ENCODE measurements at regions of chr16 and their contacts with region 1.

Region 1: GRCh38 chr16:24118126-24118821 is 137.9 kb upstream of the CACNG3 start:
- DNase-seq: no peak
- ATAC-seq: no peak
- H3K4me3 ChIP-seq: no peak overlapping the region
- H3K27ac ChIP-seq: no peak overlapping the region
- H3K4me1 ChIP-seq: no peaks in the 10 kb centered on the region
- H3K27me3 ChIP-seq: peaks cover 16% of the 10 kb centered on the region
- CTCF ChIP-seq: no peak

Region 2: DNA sequence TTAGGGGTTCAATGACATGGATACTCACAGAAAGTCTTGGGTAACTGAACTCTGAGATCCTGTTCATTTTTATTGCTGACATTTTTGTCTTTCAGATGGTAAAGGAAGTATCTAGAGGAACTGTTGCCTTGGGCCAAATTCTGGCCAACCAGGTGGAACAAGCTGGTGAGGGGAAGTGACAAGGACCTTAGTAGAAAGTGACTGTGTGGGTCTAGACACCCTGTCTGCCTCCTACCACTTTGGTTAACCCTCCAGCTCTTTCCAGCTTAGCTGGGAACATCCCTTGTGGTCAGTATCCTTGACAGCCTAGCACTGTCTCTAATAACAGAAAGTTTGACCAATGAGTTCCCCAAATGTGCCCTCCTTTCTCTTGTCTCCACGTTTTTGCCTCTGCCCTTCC is 311.2 kb before region 1 on chr16:
- CTCF ChIA-PET with region 1: no interaction called
- POLR2A ChIA-PET with region 1: no interaction called
- in situ Hi-C with region 1: no loop called
- intact Hi-C with region 1: no loop called
- DNase-seq: no peak
- ATAC-seq: no peak
- H3K4me3 ChIP-seq: no peak overlapping the region
- H3K27ac ChIP-seq: no peak overlapping the region
- H3K4me1 ChIP-seq: no peaks in the 10 kb centered on the region
- H3K27me3 ChIP-seq: peaks cover 14% of the 10 kb centered on the region; the same call in 1 of the 2 replicates
- CTCF ChIP-seq: no peak

Region 3: GRCh38 chr16:24102209-24102660 is 16.0 kb before region 1 on chr16:
- CTCF ChIA-PET with region 1: no interaction called
- POLR2A ChIA-PET with region 1: no interaction called
- in situ Hi-C with region 1: no loop called
- intact Hi-C with region 1: no loop called
- DNase-seq: no peak
- ATAC-seq: no peak
- H3K4me3 ChIP-seq: no peak overlapping the region
- H3K27ac ChIP-seq: no peak overlapping the region
- H3K4me1 ChIP-seq: no peaks in the 10 kb centered on the region
- H3K27me3 ChIP-seq: peaks cover 8% of the 10 kb centered on the region; the same call in 1 of the 2 replicates
- CTCF ChIP-seq: no peak

Region 4: GRCh38 chr16:24130494-24131085 is 12.3 kb after region 1 on chr16:
- CTCF ChIA-PET with region 1: no interaction called
- POLR2A ChIA-PET with region 1: interaction called, 14 read pairs
- in situ Hi-C with region 1: no loop called
- intact Hi-C with region 1: no loop called
- DNase-seq: no peak
- ATAC-seq: no peak
- H3K4me3 ChIP-seq: no peak overlapping the region
- H3K27ac ChIP-seq: no peak overlapping the region
- H3K4me1 ChIP-seq: no peaks in the 10 kb centered on the region
- H3K27me3 ChIP-seq: peaks cover 10% of the 10 kb centered on the region
- CTCF ChIP-seq: no peak

Measured in Panc1 (cell line).